ENCODE measurements at regions of chr15 and their contacts with region 1.

Region 1: DNA sequence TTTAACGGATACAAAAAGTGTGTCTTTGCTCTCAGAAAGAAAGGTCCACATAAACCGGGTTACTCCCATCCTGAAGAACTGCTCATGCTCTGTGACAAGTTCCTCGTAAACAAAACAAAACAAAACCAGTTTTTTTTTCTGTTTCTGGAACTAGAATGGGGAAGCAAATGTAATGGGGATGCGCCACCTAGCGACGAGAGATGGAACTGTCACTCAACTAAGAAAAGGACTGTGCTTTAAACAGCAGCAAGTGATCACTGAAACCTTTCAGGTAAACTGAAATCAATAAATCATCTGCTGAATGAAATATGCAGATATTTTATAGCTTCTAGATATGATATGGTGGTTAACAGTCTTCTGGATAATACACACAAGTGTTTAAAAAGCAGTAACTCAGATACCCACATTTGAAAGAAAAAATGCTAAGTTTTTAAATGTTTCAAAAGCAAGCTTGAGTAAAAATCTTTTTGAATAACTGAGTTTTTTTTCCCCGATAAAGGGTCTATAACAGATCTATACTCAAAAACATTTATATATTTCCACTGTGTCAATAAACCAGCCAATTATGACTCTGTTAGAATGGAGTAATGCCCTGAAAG is 10.9 kb downstream of the TM2D3 start:
- DNase-seq: peak; percentile 78
- ATAC-seq: peak; percentile 35; the same call in 1 of the 2 replicates
- H3K4me3 ChIP-seq: no peak overlapping the region
- H3K27ac ChIP-seq: no peak overlapping the region
- H3K4me1 ChIP-seq: peaks cover 16% of the 10 kb centered on the region
- H3K27me3 ChIP-seq: no peaks in the 10 kb centered on the region
- CTCF ChIP-seq: peak; percentile 96

Region 2: GRCh38 chr15:101288908-101289513 is 352.3 kb before region 1 on chr15:
- CTCF ChIA-PET with region 1: no interaction called
- POLR2A ChIA-PET with region 1: no interaction called
- intact Hi-C with region 1: loop called (anchors 1 kb)
- DNase-seq: peak; percentile 68
- ATAC-seq: peak; percentile 33
- H3K4me3 ChIP-seq: no peak overlapping the region
- H3K27ac ChIP-seq: no peak overlapping the region
- H3K4me1 ChIP-seq: 0 out of 2 replicates have a peak, but pooled peaks cover 10% of the 10 kb centered on the region
- H3K27me3 ChIP-seq: no peaks in the 10 kb centered on the region
- CTCF ChIP-seq: peak; percentile 86

Region 3: DNA sequence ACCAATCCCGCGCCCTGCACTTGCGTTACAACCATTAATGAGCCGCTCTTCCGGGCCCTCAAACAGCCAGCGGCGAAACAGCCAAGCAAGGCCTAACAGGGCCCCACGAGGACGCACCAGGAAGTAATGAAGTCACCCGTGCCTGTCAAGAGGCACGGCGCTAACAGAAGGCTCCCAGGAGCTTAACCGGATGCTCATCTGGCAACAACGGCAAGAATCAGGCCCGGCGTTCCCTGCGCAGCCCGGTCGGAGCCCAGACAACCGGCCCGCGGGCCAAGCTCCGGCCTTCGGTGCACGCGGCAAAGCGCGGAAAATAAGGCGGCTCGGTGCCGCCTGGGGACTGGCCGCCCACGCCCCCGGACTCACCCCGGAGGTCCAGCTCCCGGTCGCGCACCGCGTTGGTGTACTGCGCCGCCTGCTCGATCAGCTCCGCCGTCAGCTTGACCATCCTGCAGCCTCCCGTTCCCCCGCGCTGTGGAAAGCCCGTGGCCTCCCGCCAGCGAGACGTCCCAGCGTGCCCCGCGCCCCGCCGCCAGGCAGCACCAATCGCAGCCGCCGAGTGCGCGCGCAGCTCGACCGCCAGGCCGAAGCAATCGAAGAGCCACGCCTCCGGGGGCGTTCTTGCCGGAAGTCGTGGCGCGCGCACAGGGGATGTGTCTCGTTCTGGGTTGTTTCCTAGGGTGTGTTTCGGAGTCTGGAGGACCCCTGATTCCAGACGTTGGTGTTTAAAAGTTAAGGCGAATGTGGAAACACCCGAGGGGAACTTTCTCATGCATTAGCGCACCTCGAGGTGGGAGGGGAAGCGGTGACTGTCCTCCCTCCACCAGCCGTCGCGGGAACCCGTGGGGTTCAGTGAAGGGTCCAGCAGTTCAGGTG is 346.3 kb before region 1 on chr15 and contains the start of gene SNRPA1:
- CTCF ChIA-PET with region 1: no interaction called
- POLR2A ChIA-PET with region 1: no interaction called
- intact Hi-C with region 1: loop called (anchors 2 kb)
- DNase-seq: peak; percentile 95
- ATAC-seq: peak; percentile 62
- H3K4me3 ChIP-seq: peak within 1 kb of the TSS; percentile 100
- H3K27ac ChIP-seq: peak within 1 kb of the TSS; percentile 82
- H3K4me1 ChIP-seq: peaks cover 32% of the 10 kb centered on the region
- H3K27me3 ChIP-seq: no peaks in the 10 kb centered on the region
- CTCF ChIP-seq: no peak
- total RNA-seq, gene SNRPA1: 66.1 and 68.2 TPM in 2 replicates

Region 4: DNA sequence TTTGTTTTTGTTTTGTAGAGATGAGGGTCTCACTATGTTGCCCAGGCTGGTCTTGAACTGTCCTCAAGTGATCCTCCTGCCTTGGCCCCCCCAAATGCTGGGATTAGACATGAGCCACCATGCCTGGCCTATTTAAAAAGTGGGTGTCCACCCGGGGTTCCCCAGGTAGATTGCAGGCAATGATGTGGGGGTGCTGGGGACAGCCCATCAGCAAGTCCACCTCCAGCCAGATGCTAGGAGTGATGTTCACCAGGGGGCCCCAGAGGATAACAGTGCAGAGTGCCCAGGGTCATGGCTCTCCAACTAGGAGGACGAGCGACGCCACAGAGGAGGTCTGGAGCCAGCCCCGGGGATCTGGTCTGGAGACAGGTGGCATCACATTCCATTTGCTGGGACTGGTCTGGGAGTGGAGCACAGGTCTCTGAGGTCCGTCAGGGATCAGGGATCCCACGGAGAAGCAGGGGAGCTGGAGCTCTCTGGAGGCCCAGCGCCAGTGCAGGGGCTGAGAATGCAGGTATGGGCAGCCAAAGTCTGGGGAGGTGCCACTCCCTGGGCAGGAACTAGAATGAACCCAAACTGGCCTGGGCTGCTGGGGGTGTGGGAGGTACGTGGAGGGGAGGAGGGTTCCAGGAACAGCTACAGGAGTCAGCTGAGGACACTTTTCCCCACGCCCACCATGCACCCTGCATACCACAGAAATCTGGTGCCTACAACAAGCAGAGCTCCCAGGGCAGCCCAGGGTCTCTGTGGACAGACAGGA is 100.6 kb before region 1 on chr15:
- CTCF ChIA-PET with region 1: no interaction called
- POLR2A ChIA-PET with region 1: no interaction called
- intact Hi-C with region 1: loop called (anchors 1 kb)
- DNase-seq: no peak
- ATAC-seq: peak; percentile 67
- H3K4me3 ChIP-seq: no peak overlapping the region
- H3K27ac ChIP-seq: no peak overlapping the region
- H3K4me1 ChIP-seq: no peaks in the 10 kb centered on the region
- H3K27me3 ChIP-seq: peaks cover 24% of the 10 kb centered on the region
- CTCF ChIP-seq: peak; percentile 20; the same call in 1 of the 2 replicates

Region 5: GRCh38 chr15:101578437-101578894 is 62.8 kb before region 1 on chr15:
- CTCF ChIA-PET with region 1: no interaction called
- POLR2A ChIA-PET with region 1: no interaction called
- intact Hi-C with region 1: loop called (anchors 2 kb)
- DNase-seq: peak; percentile 53
- ATAC-seq: peak; percentile 40
- H3K4me3 ChIP-seq: no peak overlapping the region
- H3K27ac ChIP-seq: no peak overlapping the region
- H3K4me1 ChIP-seq: peaks cover 42% of the 10 kb centered on the region
- H3K27me3 ChIP-seq: no peaks in the 10 kb centered on the region
- CTCF ChIP-seq: peak; percentile 56

Region 6: DNA sequence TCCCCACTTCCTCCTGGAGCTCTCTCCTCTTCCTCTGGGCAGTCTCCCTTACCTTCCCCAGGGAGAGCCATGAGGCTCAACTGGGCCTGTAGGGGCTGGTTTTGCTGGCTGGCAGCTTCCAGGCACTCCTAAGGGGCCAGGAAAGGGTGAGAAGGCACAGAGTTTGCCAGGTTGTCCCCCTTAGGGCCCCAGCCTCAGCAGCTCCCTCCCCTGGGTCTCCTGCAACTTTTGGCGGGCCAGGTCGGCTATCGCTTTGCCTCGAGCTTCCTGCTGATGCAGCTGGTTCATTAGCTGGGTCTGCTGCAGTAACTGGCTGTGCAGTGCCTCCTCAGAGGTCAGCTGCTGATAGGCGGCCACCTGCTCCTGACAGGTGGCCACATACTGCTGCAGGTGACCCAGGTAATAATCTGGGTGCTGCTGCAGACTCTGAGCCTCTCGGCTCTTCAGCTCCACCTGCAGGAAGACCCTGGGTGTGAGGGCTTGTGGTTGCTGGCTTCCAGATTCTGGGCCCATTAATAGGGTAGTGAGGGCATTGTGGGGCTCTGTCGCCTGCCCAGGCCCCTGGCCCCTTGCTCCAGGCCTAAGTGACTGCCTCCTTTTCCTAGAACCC is 132.3 kb after region 1 on chr15:
- CTCF ChIA-PET with region 1: no interaction called
- POLR2A ChIA-PET with region 1: no interaction called
- intact Hi-C with region 1: no loop called
- DNase-seq: peak; percentile 19
- ATAC-seq: no peak
- H3K4me3 ChIP-seq: no peak overlapping the region
- H3K27ac ChIP-seq: no peak overlapping the region
- H3K4me1 ChIP-seq: no peaks in the 10 kb centered on the region
- H3K27me3 ChIP-seq: peaks cover 42% of the 10 kb centered on the region
- CTCF ChIP-seq: 0 out of 2 replicates have a peak, but pooled peaks have one; percentile 34